ENCODE measurements at regions of chr16 and their contacts with region 1.

Region 1: DNA sequence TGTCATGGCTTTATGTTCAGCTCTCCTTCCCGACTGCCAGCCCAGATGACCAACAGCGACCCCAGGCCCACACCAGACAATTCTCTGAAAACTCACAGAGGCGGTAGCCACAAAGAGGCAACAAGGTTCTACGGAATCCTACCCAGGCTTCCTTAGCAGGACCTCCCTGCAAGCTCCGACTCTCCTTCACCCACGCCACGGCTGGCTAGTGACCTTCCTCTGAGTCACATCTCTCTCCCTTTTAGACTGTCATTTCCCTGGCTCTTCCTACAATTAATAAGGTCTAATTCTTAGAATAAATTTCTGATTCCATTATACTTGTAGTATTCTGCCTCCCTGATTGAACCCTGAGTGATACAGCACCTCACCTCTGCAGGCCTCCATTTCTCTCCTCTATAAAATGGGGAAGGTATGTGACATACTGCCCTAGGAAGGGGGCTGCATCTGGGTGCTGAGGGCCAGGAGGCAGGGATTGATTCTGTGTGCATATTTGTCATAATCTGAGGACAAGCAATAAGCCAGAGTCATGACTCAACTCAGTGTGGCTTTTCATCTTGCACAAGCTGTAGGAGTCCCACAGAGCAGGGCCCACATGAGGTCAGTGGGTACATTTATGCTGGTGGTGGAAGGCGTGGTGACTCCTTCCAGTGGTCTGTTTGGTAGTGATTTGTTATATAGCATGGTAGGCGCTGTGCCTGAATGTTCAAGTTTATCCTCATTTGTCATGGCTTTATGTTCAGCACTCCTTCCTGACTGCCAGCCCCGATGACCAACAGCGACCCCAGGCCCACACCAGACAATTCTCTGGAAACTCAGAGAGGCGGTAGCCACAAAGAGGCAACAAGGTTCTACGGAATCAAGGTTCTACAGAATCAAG is 46.2 kb downstream of the SMPD3 start:
- DNase-seq: no peak
- H3K4me3 ChIP-seq: no peak overlapping the region
- H3K27ac ChIP-seq: no peak overlapping the region
- H3K4me1 ChIP-seq: no peaks in the 10 kb centered on the region
- H3K27me3 ChIP-seq: no peaks in the 10 kb centered on the region
- CTCF ChIP-seq: no peak

Region 2: GRCh38 chr16:68264128-68265077 is 137.7 kb before region 1 on chr16 and contains the start of gene SLC7A6:
- intact Hi-C with region 1: no loop called
- DNase-seq: peak; percentile 82
- H3K4me3 ChIP-seq: peak within 1 kb of the TSS; percentile 83
- H3K27ac ChIP-seq: peak within 1 kb of the TSS; percentile 91
- H3K4me1 ChIP-seq: peaks cover 6% of the 10 kb centered on the region
- H3K27me3 ChIP-seq: no peaks in the 10 kb centered on the region
- CTCF ChIP-seq: peak; percentile 65
- total RNA-seq, gene SLC7A6: 22.0 to 42.2 TPM

Region 3: GRCh38 chr16:68436581-68436980 is 34.5 kb after region 1 on chr16:
- intact Hi-C with region 1: loop called (anchors 1 kb)
- DNase-seq: no peak
- H3K4me3 ChIP-seq: no peak overlapping the region
- H3K27ac ChIP-seq: no peak overlapping the region
- H3K4me1 ChIP-seq: no peaks in the 10 kb centered on the region
- H3K27me3 ChIP-seq: no peaks in the 10 kb centered on the region
- CTCF ChIP-seq: no peak

Region 4: DNA sequence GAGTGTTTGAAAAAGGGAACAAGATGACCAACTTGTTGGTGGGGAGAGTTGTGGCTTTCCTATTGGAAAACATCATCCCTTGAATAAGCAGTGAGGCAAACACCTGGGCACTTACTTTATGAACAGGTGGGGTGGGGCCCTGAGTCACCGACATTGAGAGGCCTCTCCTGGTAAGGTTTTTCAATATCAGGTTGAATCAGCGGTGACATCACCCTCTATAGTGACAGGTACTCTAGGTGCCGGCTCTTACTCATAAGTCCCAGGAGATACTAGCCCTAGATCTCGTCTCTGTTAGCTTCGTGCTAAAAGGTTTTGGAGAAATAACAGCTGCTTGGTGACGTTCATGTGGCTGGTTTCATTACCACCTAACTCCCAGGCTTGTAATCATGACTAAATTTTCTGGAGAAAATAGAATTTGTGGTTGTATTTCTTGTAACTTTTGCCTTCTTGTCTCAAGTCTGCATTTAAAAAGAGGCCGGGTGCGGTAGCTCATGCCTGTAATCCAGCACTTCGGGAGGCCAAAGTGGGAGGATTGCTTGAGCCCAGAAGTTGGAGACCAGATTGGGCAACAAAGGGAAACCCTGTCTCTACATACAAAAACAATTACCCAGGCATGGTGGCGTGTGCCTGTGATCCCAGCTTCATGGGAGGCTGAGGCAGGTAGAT is 354.3 kb after region 1 on chr16:
- intact Hi-C with region 1: no loop called
- DNase-seq: peak; percentile 90
- H3K4me3 ChIP-seq: no peak overlapping the region
- H3K27ac ChIP-seq: peak overlapping the region; percentile 84
- H3K4me1 ChIP-seq: peaks cover 8% of the 10 kb centered on the region
- H3K27me3 ChIP-seq: no peaks in the 10 kb centered on the region
- CTCF ChIP-seq: no peak

Measured in colonic mucosa (tissue), 4 donors.